Aorta (tissue), 5 donors: ENCODE measurements at regions of chrX and their contacts with region 1.

Region 1: GRCh38 chrX:103533511-103534216 is 14.4 kb upstream of the RAB40A start:
- DNase-seq: peak; percentile 75 to 89
- ATAC-seq: peak; percentile 83
- H3K4me3 ChIP-seq: no peak overlapping the region
- H3K27ac ChIP-seq: peak overlapping the region in 1 of 2 donors; percentile 23
- H3K4me1 ChIP-seq: peaks cover 0 to 3% of the 10 kb centered on the region in 2 donors
- H3K27me3 ChIP-seq: no peaks in the 10 kb centered on the region

Region 2: GRCh38 chrX:103629318-103630170 is 95.9 kb after region 1 on chrX:
- intact Hi-C with region 1: loop called (anchors 10 kb)
- DNase-seq: peak; percentile 76 to 86
- ATAC-seq: peak; percentile 93
- H3K4me3 ChIP-seq: peak overlapping the region; percentile 44 to 92
- H3K27ac ChIP-seq: peak overlapping the region; percentile 47 to 88
- H3K4me1 ChIP-seq: no peaks in the 10 kb centered on the region
- H3K27me3 ChIP-seq: no peaks in the 10 kb centered on the region

Region 3: DNA sequence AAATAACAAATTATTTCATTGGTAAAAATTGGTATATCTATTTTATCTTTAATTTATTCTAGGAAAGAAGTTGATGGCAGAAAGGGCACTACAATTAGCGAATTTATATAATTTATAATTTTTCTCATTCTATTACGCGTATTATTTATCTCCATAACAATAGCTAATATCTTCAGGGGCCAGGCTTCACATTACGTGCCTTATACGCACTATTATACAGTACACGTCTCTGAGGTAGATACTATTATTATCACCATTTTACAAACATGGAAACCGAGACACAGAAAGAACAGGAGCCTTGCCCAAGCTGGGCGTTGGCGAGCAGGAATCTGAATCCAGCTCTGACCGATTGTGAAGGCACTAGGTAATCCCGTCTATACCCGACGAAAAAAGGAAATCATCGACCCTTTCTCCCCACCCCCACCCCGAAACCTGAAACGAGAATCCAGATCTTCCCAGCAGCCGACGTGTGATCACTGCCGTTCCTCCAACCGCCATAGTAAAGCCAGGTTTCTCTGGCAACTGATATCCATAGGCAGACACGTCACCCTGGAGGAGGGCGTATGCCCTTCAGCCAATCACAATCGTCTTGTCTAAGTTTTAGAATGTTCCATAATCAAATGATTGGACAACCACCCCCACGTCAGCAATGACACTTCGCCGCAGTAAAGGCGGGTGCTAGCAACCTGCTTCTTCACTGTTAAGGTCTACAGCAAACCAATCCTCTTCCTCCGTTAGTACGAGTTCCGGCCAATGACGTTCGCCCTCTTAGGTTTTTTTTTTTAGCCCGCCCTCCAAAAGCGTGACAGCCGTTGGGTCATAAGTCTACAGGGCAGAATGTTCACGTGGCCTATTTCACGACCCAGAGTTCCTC is 152.8 kb after region 1 on chrX and contains the start of gene MORF4L2:
- intact Hi-C with region 1: loop called (anchors 2 to 5 kb)
- DNase-seq: peak; percentile 92 to 94
- ATAC-seq: peak; percentile 92
- H3K4me3 ChIP-seq: peak within 1 kb of the TSS; percentile 49 to 90
- H3K27ac ChIP-seq: peak within 1 kb of the TSS in 1 of 2 donors; percentile 99
- H3K4me1 ChIP-seq: no peaks in the 10 kb centered on the region
- H3K27me3 ChIP-seq: no peaks in the 10 kb centered on the region
- total RNA-seq, gene MORF4L2: 214 to 399 TPM

Region 4: DNA sequence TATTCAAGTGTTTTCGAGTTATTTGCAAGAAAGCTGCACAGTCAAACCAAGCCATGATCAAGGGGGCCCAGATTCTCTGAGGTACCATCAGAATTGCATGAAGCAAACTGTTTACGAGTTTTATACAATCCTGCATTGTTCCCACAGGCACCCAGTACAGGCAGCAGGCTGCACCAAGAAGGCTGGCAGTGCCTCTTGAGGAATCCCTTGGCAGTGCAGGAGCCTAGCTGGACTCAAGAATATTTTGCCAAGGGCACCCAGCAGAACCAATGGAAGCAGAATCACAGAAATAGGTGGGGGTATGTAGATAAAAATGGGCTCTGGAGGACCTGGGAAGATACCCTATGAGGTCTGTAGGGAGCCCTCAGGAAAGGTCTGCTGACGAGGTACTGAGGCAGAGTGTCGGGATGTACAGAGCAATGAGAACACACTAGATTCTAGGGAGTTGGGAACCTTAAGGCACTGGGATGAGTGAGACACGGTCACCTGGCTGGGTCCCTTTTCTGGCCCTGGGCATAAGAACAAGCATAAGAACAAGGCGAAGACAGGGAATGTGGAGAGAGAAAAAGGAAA is 240.5 kb after region 1 on chrX:
- intact Hi-C with region 1: loop called in 1 of 2 experiments (anchors 5 kb)
- DNase-seq: no peak
- ATAC-seq: no peak
- H3K4me3 ChIP-seq: no peak overlapping the region
- H3K27ac ChIP-seq: no peak overlapping the region
- H3K4me1 ChIP-seq: no peaks in the 10 kb centered on the region
- H3K27me3 ChIP-seq: no peaks in the 10 kb centered on the region

Region 5: GRCh38 chrX:103817502-103817901 is 283.8 kb after region 1 on chrX:
- intact Hi-C with region 1: loop called (anchors 5 kb)
- DNase-seq: no peak
- ATAC-seq: peak; percentile 75
- H3K4me3 ChIP-seq: no peak overlapping the region
- H3K27ac ChIP-seq: no peak overlapping the region
- H3K4me1 ChIP-seq: no peaks in the 10 kb centered on the region
- H3K27me3 ChIP-seq: no peaks in the 10 kb centered on the region